ENCODE measurements at regions of chr1 and their contacts with region 1.

Region 1: GRCh38 chr1:12177999-12178441 is 11.2 kb downstream of the TNFRSF1B start:
- DNase-seq: peak; percentile 90 to 96
- ATAC-seq: peak; percentile 48 to 64 (median 52)
- H3K4me3 ChIP-seq: peak overlapping the region; percentile 0
- H3K4me3 Mint-ChIP-seq: peak overlapping the region; percentile 87
- H3K27ac ChIP-seq: peak overlapping the region; percentile 94
- H3K27ac Mint-ChIP-seq: peak overlapping the region; percentile 99
- H3K4me1 ChIP-seq: peaks cover 100% of the 10 kb centered on the region
- H3K4me1 Mint-ChIP-seq: peaks cover 76 to 97% of the 10 kb centered on the region in 2 donors
- H3K27me3 ChIP-seq: no peaks in the 10 kb centered on the region
- H3K27me3 Mint-ChIP-seq: no peaks in the 10 kb centered on the region
- CTCF ChIP-seq: no peak

Region 2: GRCh38 chr1:11594222-11594621 is 583.8 kb before region 1 on chr1:
- intact Hi-C with region 1: no loop called
- DNase-seq: no peak
- ATAC-seq: no peak
- H3K4me3 ChIP-seq: no peak overlapping the region
- H3K4me3 Mint-ChIP-seq: no peak overlapping the region
- H3K27ac ChIP-seq: no peak overlapping the region
- H3K27ac Mint-ChIP-seq: no peak overlapping the region
- H3K4me1 ChIP-seq: no peaks in the 10 kb centered on the region
- H3K4me1 Mint-ChIP-seq: no peaks in the 10 kb centered on the region
- H3K27me3 ChIP-seq: no peaks in the 10 kb centered on the region
- H3K27me3 Mint-ChIP-seq: peaks cover 21 to 37% of the 10 kb centered on the region in 2 donors
- CTCF ChIP-seq: no peak

Region 3: DNA sequence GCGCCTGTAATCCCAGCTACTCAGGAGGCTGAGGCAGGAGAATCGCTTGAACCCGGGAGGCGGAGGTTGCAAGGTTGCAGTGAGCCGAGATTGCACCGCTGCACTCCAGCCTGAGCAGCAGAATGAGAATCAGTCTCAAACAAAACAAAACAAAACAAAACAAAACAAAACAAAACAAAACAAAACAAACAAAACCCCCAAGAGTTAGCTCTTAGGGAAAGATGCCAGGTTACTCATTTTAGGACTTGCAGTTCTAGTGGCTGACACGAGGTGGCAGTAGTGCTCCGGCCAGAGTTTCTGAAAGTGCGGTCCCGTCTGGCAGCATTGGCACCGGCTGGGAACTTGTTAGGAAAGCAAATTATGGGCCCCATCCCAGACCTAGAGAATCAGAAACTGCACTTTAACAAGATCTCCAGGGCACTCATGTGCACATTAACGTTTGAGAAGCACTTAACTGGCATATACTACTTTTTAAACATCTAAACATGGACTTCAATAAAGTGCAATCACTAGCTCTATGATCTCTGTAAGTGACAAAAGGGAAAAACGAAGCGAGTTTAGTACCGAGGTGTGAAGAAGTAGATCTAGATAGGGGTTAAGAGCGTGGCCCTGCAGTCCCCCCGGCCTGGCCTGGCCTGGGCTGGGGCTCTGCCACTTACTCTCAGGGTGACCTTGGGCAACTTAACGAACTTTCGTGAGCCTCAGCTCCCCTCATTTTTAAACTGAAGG is 53.2 kb before region 1 on chr1:
- intact Hi-C with region 1: loop called (anchors 2 kb)
- DNase-seq: peak; percentile 79 to 90
- ATAC-seq: peak; percentile 78 to 96 (median 87)
- H3K4me3 ChIP-seq: no peak overlapping the region
- H3K4me3 Mint-ChIP-seq: peak overlapping the region; percentile 67
- H3K27ac ChIP-seq: no peak overlapping the region
- H3K27ac Mint-ChIP-seq: peak overlapping the region; percentile 64 to 74
- H3K4me1 ChIP-seq: peaks cover 27% of the 10 kb centered on the region
- H3K4me1 Mint-ChIP-seq: peaks cover 16 to 30% of the 10 kb centered on the region in 2 donors
- H3K27me3 ChIP-seq: no peaks in the 10 kb centered on the region
- H3K27me3 Mint-ChIP-seq: peaks cover 0 to 5% of the 10 kb centered on the region in 2 donors
- CTCF ChIP-seq: peak; percentile 90

Region 4: GRCh38 chr1:12161662-12162458 is 16.2 kb before region 1 on chr1:
- intact Hi-C with region 1: loop called (anchors 1 kb)
- DNase-seq: peak; percentile 73 to 90
- ATAC-seq: peak; percentile 78 to 95 (median 89)
- H3K4me3 ChIP-seq: no peak overlapping the region
- H3K4me3 Mint-ChIP-seq: peak overlapping the region; percentile 70
- H3K27ac ChIP-seq: peak overlapping the region; percentile 86
- H3K27ac Mint-ChIP-seq: peak overlapping the region; percentile 93 to 97
- H3K4me1 ChIP-seq: peaks cover 97% of the 10 kb centered on the region
- H3K4me1 Mint-ChIP-seq: peaks cover 59 to 69% of the 10 kb centered on the region in 2 donors
- H3K27me3 ChIP-seq: no peaks in the 10 kb centered on the region
- H3K27me3 Mint-ChIP-seq: no peaks in the 10 kb centered on the region
- CTCF ChIP-seq: no peak

Region 5: DNA sequence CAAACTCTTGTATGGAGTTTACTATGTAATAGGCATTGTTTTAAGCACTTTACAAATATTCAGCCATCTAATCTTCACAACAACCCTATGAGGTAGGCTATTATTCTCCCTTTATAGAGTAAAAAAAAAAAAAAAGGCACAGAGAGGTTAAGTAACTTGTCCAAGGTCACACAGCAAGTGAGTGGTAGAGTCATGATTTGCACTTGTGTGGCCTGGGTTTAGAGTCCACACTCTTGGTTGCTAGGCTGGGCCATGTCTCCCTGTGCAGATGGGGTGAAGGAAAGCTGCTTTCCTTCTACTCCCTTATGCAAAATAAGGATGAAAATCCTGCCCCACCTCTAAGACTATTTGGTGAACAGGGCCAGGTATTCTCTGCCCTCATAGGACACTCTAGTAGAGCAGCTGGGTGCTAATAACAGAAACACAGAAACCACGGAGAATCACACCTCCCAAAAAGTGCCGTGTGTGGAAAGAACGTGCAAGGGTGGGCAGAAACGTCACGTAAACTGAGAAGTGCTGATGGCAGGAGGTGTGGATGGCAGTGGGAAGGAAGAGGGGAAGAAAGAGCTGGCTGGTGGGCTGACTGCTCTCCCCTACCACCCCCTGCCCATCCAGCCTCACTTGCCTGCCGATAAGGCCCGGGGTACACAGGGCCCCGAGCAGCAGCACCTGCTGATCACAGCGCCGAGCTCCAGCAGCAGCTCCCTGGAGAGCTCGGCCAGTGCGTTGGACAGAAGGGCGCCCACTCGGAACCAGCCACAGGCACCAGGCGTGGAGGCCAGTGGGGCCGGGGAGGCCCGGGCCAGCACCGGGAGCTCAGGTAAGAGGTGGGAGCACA is 23.6 kb after region 1 on chr1:
- intact Hi-C with region 1: loop called (anchors 1 kb)
- DNase-seq: peak; percentile 59 to 75
- ATAC-seq: peak; percentile 82 to 86 (median 84)
- H3K4me3 ChIP-seq: no peak overlapping the region
- H3K4me3 Mint-ChIP-seq: peak overlapping the region; percentile 54
- H3K27ac ChIP-seq: peak overlapping the region; percentile 80
- H3K27ac Mint-ChIP-seq: peak overlapping the region; percentile 86 to 88
- H3K4me1 ChIP-seq: peaks cover 75% of the 10 kb centered on the region
- H3K4me1 Mint-ChIP-seq: peaks cover 27 to 44% of the 10 kb centered on the region in 2 donors
- H3K27me3 ChIP-seq: no peaks in the 10 kb centered on the region
- H3K27me3 Mint-ChIP-seq: no peaks in the 10 kb centered on the region
- CTCF ChIP-seq: no peak